ENCODE measurements at regions of chr5 and their contacts with region 1.

Region 1: DNA sequence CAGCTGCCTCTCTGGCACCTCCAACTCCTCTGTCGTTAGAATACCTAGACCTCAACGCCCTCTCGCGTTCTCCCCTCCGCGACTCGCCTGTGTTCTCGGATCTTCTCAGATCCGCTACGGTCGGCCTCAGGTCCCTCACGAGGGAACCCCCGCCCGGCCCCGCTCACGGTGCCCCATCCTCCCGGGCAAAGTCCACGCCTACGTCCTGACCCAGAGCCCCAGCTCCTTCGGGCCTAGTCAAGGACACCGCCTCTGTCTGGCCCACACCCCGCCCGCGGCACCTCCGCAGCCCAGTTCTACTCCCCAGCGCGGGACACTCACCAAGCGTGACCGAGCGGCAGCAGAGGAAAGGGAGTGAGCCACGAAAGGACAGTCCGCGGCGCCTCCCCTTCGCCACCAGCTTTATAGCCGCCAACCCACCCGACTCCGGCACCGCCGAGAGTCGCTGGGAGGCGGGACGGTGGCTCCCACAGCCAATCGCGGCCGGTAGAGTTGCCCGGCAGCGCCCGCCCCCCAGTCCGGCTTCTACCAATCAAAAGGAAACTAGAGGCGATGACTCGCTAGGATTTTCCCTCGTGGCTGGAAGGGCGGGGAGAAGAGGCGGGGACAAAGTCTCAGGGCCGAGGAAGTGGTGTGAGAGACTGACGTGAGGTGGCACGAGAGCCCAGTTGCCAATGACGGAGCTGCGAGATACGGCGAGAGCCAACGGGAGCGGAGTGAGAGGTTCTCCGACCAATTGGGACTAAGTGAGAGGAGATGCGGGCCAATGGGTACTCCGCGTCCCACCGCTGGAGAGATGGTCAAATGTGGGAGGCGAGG is at the start of gene HMGCS1:
- DNase-seq: peak; percentile 100
- total RNA-seq, gene HMGCS1: 14.9 and 16.3 TPM in 2 replicates

Region 2: GRCh38 chr5:42767491-42768105 is 545.6 kb before region 1 on chr5:
- in situ Hi-C with region 1: no loop called
- DNase-seq: peak; percentile 6

Region 3: DNA sequence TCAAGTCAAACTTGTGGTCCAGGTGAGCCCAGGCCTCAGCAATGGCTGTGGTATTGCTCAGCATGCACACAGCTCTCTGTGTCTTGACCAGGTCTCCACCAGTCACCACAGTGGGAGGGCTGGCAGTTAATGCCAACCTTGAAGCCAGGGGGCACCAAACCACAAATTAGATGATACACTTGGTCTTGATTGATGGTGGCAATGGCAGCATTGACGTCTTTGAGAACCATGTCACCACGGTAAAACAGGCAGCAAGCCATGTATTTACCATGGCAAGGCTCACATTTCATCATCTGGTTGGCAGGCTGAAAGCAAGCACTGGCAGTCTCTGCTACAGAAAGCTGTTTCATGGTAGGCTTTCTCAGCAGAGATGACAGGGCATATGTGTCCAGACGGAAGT is 81.3 kb before region 1 on chr5:
- in situ Hi-C with region 1: loop called (anchors 10 kb)
- DNase-seq: peak; percentile 30

Region 4: GRCh38 chr5:43396762-43397304 is 83.6 kb after region 1 on chr5:
- in situ Hi-C with region 1: no loop called
- DNase-seq: peak; percentile 71

Region 5: GRCh38 chr5:43543434-43543833 is 230.2 kb after region 1 on chr5:
- in situ Hi-C with region 1: no loop called
- DNase-seq: peak; percentile 22

Region 6: GRCh38 chr5:44199408-44199807 is 886.2 kb after region 1 on chr5:
- in situ Hi-C with region 1: no loop called
- DNase-seq: no peak